ENCODE measurements at regions of chr5 and their contacts with region 1.

Region 1: GRCh38 chr5:14270209-14270702 is 127.1 kb downstream of the TRIO start:
- DNase-seq: peak in 3 of 4 donors; percentile 26 to 48 (median 27)
- ATAC-seq: peak; percentile 80
- H3K4me3 ChIP-seq: no peak overlapping the region
- H3K27ac ChIP-seq: peak overlapping the region in 2 of 4 donors; percentile 27 to 40
- H3K4me1 ChIP-seq: peaks cover 26% of the 10 kb centered on the region
- H3K27me3 ChIP-seq: no peaks in the 10 kb centered on the region
- CTCF ChIP-seq: peak; percentile 31 to 80 (median 71)
- POLR2A ChIP-seq: no peak

Region 2: GRCh38 chr5:14008819-14009311 is 261.4 kb before region 1 on chr5:
- intact Hi-C with region 1: loop called (anchors 10 kb)
- DNase-seq: peak; percentile 47 to 67 (median 54)
- ATAC-seq: peak; percentile 67
- H3K4me3 ChIP-seq: no peak overlapping the region
- H3K27ac ChIP-seq: peak overlapping the region; percentile 33 to 79 (median 60)
- H3K4me1 ChIP-seq: peaks cover 27% of the 10 kb centered on the region
- H3K27me3 ChIP-seq: no peaks in the 10 kb centered on the region
- CTCF ChIP-seq: no peak
- POLR2A ChIP-seq: peak in 1 of 3 donors; percentile 10

Region 3: GRCh38 chr5:14415024-14415697 is 144.9 kb after region 1 on chr5:
- intact Hi-C with region 1: no loop called
- DNase-seq: no peak
- ATAC-seq: no peak
- H3K4me3 ChIP-seq: no peak overlapping the region
- H3K27ac ChIP-seq: no peak overlapping the region
- H3K4me1 ChIP-seq: no peaks in the 10 kb centered on the region
- H3K27me3 ChIP-seq: no peaks in the 10 kb centered on the region
- CTCF ChIP-seq: no peak
- POLR2A ChIP-seq: no peak